Cardiac septum (tissue), 1 donor: ENCODE measurements at regions of chr9 and their contacts with region 1.

Region 1: GRCh38 chr9:105157130-105157583 is 87.3 kb upstream of the SLC44A1 start:
- DNase-seq: peak; percentile 76

Region 2: GRCh38 chr9:104934691-104935500 is 222.3 kb before region 1 on chr9:
- intact Hi-C with region 1: loop called (anchors 2 kb)
- DNase-seq: no peak

Region 3: DNA sequence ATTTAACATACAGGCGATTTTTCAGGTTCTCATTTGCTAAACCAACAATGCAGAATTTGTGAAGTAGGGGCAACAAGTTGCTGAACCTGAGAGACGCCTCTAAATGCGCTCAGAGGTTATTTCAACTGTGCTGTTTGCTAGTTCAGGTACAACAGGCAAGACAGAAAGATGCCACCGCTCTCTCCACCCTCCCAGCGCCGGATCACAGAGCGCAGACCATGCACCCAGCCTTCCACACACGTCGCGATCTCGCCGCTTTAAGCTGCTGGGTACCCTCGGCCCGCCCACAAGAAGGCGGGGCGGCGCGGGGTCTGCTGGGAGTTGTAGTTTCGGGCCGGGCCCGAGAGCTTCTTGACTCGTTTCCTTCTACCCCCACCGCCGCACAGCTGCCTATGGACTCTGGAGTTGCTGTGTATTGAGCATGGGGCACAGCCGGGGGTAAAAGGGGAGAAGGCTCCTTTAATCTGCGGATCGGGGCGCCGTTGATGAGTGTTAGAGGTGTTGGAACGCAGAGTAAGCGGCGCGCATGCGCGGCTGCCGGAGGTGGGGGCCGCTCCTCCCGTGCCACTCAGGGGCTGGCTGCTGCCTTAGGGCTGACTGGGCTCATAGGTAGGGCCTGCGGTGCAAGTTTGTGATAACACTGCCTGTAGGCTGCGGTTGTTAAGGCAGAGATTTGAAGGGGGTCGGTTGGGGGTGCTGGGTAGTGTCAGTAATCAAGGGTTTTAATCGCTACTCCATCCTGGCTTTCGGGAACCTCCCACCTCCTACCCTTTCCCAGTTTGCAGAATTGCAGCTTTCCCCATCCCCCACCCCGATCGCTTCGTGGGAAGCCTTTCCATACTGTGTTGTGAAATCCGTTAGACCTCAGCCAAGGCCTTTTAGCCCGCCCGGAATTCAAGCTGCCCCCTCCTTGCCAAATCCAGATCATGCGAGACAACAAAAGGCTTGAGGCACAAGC is 188.9 kb before region 1 on chr9:
- intact Hi-C with region 1: loop called (anchors 2 kb)
- DNase-seq: peak; percentile 95

Region 4: GRCh38 chr9:105414947-105415661 is 257.9 kb after region 1 on chr9:
- intact Hi-C with region 1: loop called (anchors 2 kb)
- DNase-seq: no peak